Activated T-helper 2 cell treated with anti-CD3 and anti-CD28 coated beads, Interferon-gamma antibody, Interleukin-2, Interleukin-4, amounts not matched to agents 10 μg/mL and 5 μg/mL and 100 μg/mL, durations not matched to agents 14 hours and 24 hours and 36 hours (primary cell): ENCODE measurements at regions of chr22 and their contacts with region 1.

Region 1: GRCh38 chr22:23893943-23894709 is at the start of gene MIF:
- DNase-seq: peak; percentile 98
- H3K4me3 Mint-ChIP-seq: peak within 1 kb of the TSS; percentile 96
- H3K27ac Mint-ChIP-seq: peak within 1 kb of the TSS; percentile 99
- H3K4me1 Mint-ChIP-seq: peaks cover 15% of the 10 kb centered on the region
- H3K27me3 Mint-ChIP-seq: no peaks in the 10 kb centered on the region
- total RNA-seq, gene MIF: 1,309 and 1,313 TPM in 2 replicates

Region 2: GRCh38 chr22:23786752-23787599 is 107.2 kb before region 1 on chr22 and contains the start of gene SMARCB1:
- intact Hi-C with region 1: loop called (anchors 2 kb)
- DNase-seq: peak; percentile 82
- H3K4me3 Mint-ChIP-seq: peak within 1 kb of the TSS; percentile 89
- H3K27ac Mint-ChIP-seq: peak within 1 kb of the TSS; percentile 92
- H3K4me1 Mint-ChIP-seq: peaks cover 26% of the 10 kb centered on the region
- H3K27me3 Mint-ChIP-seq: no peaks in the 10 kb centered on the region
- total RNA-seq, gene SMARCB1: 94.1 and 96.4 TPM in 2 replicates

Region 3: GRCh38 chr22:23857606-23858483 is 36.3 kb before region 1 on chr22 and contains the start of gene SLC2A11:
- intact Hi-C with region 1: loop called (anchors 2 kb)
- DNase-seq: peak; percentile 94
- H3K4me3 Mint-ChIP-seq: peak within 1 kb of the TSS; percentile 87
- H3K27ac Mint-ChIP-seq: peak within 1 kb of the TSS; percentile 86
- H3K4me1 Mint-ChIP-seq: peaks cover 16% of the 10 kb centered on the region
- H3K27me3 Mint-ChIP-seq: peaks cover 5% of the 10 kb centered on the region
- total RNA-seq, gene SLC2A11: 9.4 and 9.6 TPM in 2 replicates

Region 4: DNA sequence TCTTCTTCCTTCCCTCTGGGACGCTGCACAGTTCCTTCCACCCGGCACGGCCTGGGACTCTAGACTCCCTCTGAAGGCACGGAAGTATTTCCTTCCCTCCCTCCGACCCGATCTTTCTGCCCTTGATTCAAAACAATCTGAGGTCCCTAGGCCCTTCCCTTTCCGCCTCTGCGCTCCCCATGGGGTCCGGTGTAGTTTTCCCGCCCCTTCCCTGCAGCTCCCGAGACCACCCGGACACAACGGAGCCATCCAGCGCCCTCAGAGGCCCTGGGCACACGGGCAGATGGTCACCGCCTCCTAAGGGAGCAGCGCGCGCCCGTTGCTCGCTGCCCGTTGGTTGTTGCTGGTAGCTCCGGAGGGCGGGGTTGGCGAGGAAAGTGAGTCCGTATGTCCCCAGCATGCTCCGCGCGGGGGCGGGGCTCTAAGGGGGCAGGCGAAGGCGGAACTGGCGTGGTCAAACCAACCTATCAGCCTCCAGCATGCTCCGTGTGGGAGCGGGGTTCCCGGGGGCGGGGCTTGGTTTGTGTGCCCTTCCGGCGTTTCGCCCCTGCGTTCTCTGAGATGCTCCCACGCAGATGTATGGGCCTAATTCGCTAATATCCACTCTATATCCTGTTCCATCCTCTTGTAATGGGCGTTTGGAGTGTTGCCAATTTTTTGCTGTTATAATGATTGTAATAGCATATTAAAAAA is 19.7 kb after region 1 on chr22:
- intact Hi-C with region 1: loop called (anchors 1 kb)
- DNase-seq: peak; percentile 100
- H3K4me3 Mint-ChIP-seq: peak overlapping the region; percentile 98
- H3K27ac Mint-ChIP-seq: peak overlapping the region; percentile 99
- H3K4me1 Mint-ChIP-seq: peaks cover 24% of the 10 kb centered on the region
- H3K27me3 Mint-ChIP-seq: peaks cover 3% of the 10 kb centered on the region